Transverse colon (tissue), 4 donors: ENCODE measurements at regions of chr14 and their contacts with region 1.

Region 1: GRCh38 chr14:36661756-36662498 is at the start of gene PAX9:
- DNase-seq: peak; percentile 86
- H3K4me3 ChIP-seq: peak within 1 kb of the TSS in 3 of 4 donors; percentile 29 to 54 (median 31)
- H3K27ac ChIP-seq: no peak within 1 kb of the TSS
- H3K4me1 ChIP-seq: peaks cover 21 to 64% (median 48%) of the 10 kb centered on the region in 4 donors
- H3K27me3 ChIP-seq: peaks cover 100% of the 10 kb centered on the region
- CTCF ChIP-seq: no peak
- EP300 ChIP-seq: no peak
- POLR2A ChIP-seq: no peak
- total RNA-seq, gene PAX9: 0.79 TPM in 1 of 4 donors, not detected in the others

Region 2: GRCh38 chr14:36553656-36554260 is 108.2 kb before region 1 on chr14:
- in situ Hi-C with region 1: no loop called
- intact Hi-C with region 1: no loop called
- DNase-seq: no peak
- H3K4me3 ChIP-seq: no peak overlapping the region
- H3K27ac ChIP-seq: no peak overlapping the region
- H3K4me1 ChIP-seq: no peaks in the 10 kb centered on the region
- H3K27me3 ChIP-seq: peaks cover 26% of the 10 kb centered on the region
- CTCF ChIP-seq: peak; percentile 46 to 63 (median 54)
- EP300 ChIP-seq: no peak
- POLR2A ChIP-seq: no peak

Region 3: GRCh38 chr14:37172024-37172869 is 510.3 kb after region 1 on chr14 and contains the start of gene SLC25A21:
- in situ Hi-C with region 1: loop called in 1 of 4 experiments (anchors 25 kb)
- intact Hi-C with region 1: no loop called
- DNase-seq: peak; percentile 68
- H3K4me3 ChIP-seq: peak within 1 kb of the TSS; percentile 50 to 73 (median 62)
- H3K27ac ChIP-seq: peak within 1 kb of the TSS; percentile 76 to 88 (median 82)
- H3K4me1 ChIP-seq: peaks cover 6 to 9% (median 6%) of the 10 kb centered on the region in 4 donors
- H3K27me3 ChIP-seq: no peaks in the 10 kb centered on the region
- CTCF ChIP-seq: peak in 1 of 5 experiments; percentile 6
- EP300 ChIP-seq: no peak
- POLR2A ChIP-seq: peak; percentile 30
- total RNA-seq, gene SLC25A21: 0.82 to 11.1 TPM in 2 of 4 donors, not detected in the others

Region 4: GRCh38 chr14:37241198-37241597 is 579.3 kb after region 1 on chr14:
- in situ Hi-C with region 1: no loop called
- intact Hi-C with region 1: no loop called
- DNase-seq: no peak
- H3K4me3 ChIP-seq: no peak overlapping the region
- H3K27ac ChIP-seq: no peak overlapping the region
- H3K4me1 ChIP-seq: no peaks in the 10 kb centered on the region
- H3K27me3 ChIP-seq: no peaks in the 10 kb centered on the region
- CTCF ChIP-seq: no peak
- EP300 ChIP-seq: no peak
- POLR2A ChIP-seq: no peak